ENCODE measurements at regions of chr16 and their contacts with region 1.

Region 1: GRCh38 chr16:70251629-70252354 is at the start of gene EXOSC6:
- DNase-seq: peak; percentile 96
- CTCF ChIP-seq: peak; percentile 96

Region 2: DNA sequence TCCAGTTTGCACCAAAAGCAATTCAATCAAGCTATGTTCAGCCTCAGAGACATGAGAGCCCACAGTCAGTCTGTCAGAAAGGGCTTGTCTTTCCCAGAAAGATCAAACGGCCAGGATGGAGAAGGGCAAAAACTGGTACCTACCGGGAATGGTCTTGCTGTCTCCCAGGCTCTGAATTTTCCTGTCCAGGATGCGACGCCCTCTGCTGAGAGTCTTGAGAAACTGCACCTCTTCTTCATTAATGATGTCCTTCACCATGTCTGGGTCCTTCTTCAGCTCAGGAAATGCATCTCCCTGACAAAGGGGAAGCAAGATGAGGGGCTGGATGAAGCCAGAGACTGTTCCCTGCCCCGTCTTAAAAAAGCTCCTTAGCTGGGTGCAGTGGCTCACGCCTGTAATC is 15.7 kb after region 1 on chr16:
- CTCF ChIA-PET with region 1: interaction called, 38 read pairs
- POLR2A ChIA-PET with region 1: no interaction called
- DNase-seq: no peak
- CTCF ChIP-seq: peak; percentile 34